Posterior cingulate gyrus (tissue), 11 donors: ENCODE measurements at regions of chr4 and their contacts with region 1.

Region 1: GRCh38 chr4:110310795-110311194 is 112.4 kb upstream of the ELOVL6 start:
- DNase-seq: no peak

Region 2: GRCh38 chr4:110005461-110006056 is 305.2 kb before region 1 on chr4:
- intact Hi-C with region 1: loop called (anchors 10 kb)
- DNase-seq: no peak

Region 3: DNA sequence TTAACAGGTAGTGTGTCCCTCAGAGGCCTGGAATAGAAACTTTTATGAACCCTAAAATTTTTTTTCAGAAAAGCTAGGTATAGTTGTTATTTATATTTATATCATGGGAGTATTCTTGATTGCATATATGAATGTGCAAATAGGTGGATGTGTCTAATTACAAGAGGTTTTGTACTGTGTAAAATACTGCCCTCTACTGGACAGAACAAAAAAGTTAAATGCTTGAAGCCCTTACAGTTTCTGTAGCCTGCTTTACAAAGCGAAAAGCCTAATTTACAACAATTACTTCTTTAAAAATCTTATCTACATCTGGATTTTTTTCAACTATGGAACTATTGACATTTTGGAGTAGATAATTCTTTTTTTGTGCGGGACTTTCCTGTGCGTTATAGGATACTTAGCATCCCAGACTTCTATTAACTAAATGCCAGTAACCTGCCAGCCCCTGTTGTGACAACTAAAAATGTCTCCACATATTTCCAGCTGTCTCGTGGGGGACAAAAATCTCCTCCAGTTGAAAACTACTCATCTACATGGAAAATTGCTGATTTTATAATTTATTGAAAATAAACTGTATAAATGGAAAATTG is 200.3 kb after region 1 on chr4:
- intact Hi-C with region 1: loop called (anchors 5 kb)
- DNase-seq: no peak

Region 4: GRCh38 chr4:110808351-110808878 is 497.6 kb after region 1 on chr4:
- intact Hi-C with region 1: no loop called
- DNase-seq: no peak